ENCODE measurements at regions of chr6 and their contacts with region 1.

Region 1: GRCh38 chr6:149082286-149082707 is 235.2 kb upstream of the TAB2 start:
- DNase-seq: peak; percentile 66 to 87
- H3K4me3 ChIP-seq: no peak overlapping the region
- H3K4me1 ChIP-seq: no peaks in the 10 kb centered on the region; the same call in 1 of the 2 replicates
- H3K27me3 ChIP-seq: peaks cover 2% of the 10 kb centered on the region; the same call in 1 of the 2 replicates

Region 2: DNA sequence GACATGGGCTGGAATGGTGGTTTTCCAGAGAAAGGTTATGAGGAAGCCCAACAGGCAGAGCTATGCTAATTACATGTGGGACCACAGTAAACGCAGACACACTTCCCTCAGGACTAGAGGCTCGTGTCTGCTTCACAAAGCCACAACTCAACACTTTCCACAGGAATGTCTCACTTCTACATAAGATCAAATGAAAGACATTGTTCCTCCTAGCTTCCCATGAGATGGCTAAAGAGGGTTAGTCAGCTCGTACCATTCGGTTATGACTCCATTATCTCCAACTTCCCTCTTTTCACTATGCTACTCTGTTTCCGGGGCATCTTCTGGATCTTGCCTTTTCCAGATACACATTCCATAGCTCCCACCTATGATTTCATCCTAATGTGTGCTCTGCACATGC is 431.6 kb after region 1 on chr6:
- in situ Hi-C with region 1: loop called (anchors 25 kb)
- DNase-seq: no peak
- H3K4me3 ChIP-seq: no peak overlapping the region
- H3K4me1 ChIP-seq: 0 out of 2 replicates have a peak, but pooled peaks cover 3% of the 10 kb centered on the region
- H3K27me3 ChIP-seq: no peaks in the 10 kb centered on the region